Mammary epithelial cell (primary cell): ENCODE measurements at regions of chr16 and their contacts with region 1.

Region 1: GRCh38 chr16:79601931-79602627 is 1.5 kb upstream of the MAF start:
- DNase-seq: peak; percentile 72
- H3K4me3 ChIP-seq: peak overlapping the region; percentile 87 to 94 (median 90)
- H3K27ac ChIP-seq: peak overlapping the region; percentile 56
- H3K4me1 ChIP-seq: peaks cover 29% of the 10 kb centered on the region
- H3K27me3 ChIP-seq: no peaks in the 10 kb centered on the region
- CTCF ChIP-seq: peak; percentile 73 to 75

Region 2: DNA sequence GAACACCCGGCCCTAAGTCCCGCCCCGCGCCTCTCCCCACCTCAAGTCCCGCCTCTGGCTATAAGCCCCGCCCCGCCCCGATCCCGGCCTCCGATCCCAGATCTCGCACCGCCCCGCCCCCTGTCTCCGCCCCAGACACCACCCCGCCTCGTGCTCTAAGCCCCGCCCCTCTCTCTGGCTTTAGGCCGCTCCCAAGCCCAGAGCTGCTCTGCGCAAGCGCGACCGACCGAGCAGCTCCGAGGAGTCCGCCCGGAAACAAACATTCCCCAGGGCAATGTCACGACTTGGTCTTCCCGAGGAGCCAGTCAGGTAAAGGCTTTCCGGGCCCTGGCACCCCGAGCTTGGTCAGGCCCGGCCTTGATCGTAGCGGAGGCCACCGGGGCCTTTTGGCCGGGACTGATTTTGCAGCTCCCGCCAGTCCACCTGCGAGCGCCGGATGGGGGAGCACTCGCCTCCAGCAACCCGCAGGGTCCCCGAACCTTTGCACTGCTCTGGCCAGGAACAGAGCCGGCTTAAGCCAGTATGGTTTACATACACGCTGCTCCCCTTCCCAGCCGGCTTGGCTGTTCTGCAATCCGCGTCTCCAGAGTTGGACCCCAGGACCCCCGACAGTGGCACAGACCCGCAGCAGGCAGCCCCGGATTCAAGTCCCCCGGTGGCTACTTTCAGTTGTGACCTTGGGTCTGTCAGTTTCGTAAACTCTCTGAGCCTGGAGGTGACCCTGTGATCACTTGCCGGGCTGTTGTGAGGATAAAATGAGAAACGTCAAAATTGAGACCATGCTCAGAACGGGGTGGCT is 1879.6 kb before region 1 on chr16 and contains the start of gene NUDT7:
- CTCF ChIA-PET with region 1: no interaction called
- dilution Hi-C with region 1: no loop called
- in situ Hi-C with region 1: no loop called
- intact Hi-C with region 1: loop called (anchors 10 kb)
- DNase-seq: peak; percentile 94
- H3K4me3 ChIP-seq: peak within 1 kb of the TSS; percentile 59 to 67 (median 63)
- H3K27ac ChIP-seq: peak within 1 kb of the TSS; percentile 68
- H3K4me1 ChIP-seq: peaks cover 10% of the 10 kb centered on the region
- H3K27me3 ChIP-seq: no peaks in the 10 kb centered on the region
- CTCF ChIP-seq: peak in 1 of 2 donors; percentile 33
- total RNA-seq, gene NUDT7: 2.8 to 5.1 TPM

Region 3: GRCh38 chr16:78684040-78684611 is 918.0 kb before region 1 on chr16:
- CTCF ChIA-PET with region 1: no interaction called
- dilution Hi-C with region 1: no loop called
- in situ Hi-C with region 1: loop called in 1 of 2 experiments (anchors 10 kb)
- intact Hi-C with region 1: no loop called
- DNase-seq: peak; percentile 53
- H3K4me3 ChIP-seq: no peak overlapping the region
- H3K27ac ChIP-seq: peak overlapping the region; percentile 95
- H3K4me1 ChIP-seq: peaks cover 25% of the 10 kb centered on the region
- H3K27me3 ChIP-seq: no peaks in the 10 kb centered on the region
- CTCF ChIP-seq: no peak

Region 4: DNA sequence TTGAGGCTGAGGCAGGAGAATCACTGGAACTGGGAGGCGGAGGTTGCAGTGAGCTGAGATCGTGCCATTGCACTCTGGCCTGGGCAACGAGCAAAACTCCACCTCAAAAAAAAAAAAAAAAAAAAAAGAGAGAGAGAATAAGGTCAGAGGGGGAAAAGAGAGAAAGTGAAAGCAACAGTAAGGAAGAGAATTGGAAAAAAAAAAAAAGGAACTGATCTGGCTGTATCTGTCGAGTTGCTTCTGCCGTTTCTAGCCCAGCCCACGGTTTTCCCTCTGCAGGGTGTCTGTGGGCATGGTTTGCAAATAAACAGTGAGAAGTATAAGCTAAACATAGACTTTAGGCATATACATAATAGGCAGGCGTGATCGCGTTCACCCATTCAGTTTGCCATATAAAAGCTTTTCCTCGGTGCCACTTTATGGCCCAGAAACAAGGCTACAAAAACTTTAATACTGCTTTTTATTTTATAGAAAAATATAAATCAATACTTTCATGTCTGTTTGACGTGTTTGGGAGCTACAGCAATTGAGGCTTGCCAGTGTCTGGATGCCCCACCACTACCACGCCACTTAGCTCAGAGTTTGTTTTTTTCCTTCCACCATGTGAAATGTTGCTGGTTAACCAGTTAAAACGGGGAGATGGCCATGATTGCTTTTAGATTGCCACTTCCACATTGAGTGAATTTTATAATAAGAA is 438.2 kb before region 1 on chr16:
- CTCF ChIA-PET with region 1: no interaction called
- dilution Hi-C with region 1: no loop called
- in situ Hi-C with region 1: no loop called
- intact Hi-C with region 1: no loop called
- DNase-seq: no peak
- H3K4me3 ChIP-seq: no peak overlapping the region
- H3K27ac ChIP-seq: no peak overlapping the region
- H3K4me1 ChIP-seq: no peaks in the 10 kb centered on the region
- H3K27me3 ChIP-seq: no peaks in the 10 kb centered on the region
- CTCF ChIP-seq: no peak

Region 5: GRCh38 chr16:79469999-79470398 is 132.1 kb before region 1 on chr16:
- CTCF ChIA-PET with region 1: no interaction called
- dilution Hi-C with region 1: no loop called
- in situ Hi-C with region 1: no loop called
- intact Hi-C with region 1: loop called (anchors 5 kb)
- DNase-seq: no peak
- H3K4me3 ChIP-seq: no peak overlapping the region
- H3K27ac ChIP-seq: no peak overlapping the region
- H3K4me1 ChIP-seq: no peaks in the 10 kb centered on the region
- H3K27me3 ChIP-seq: no peaks in the 10 kb centered on the region
- CTCF ChIP-seq: no peak

Region 6: GRCh38 chr16:79535130-79535529 is 66.9 kb before region 1 on chr16:
- CTCF ChIA-PET with region 1: no interaction called
- dilution Hi-C with region 1: no loop called
- in situ Hi-C with region 1: no loop called
- intact Hi-C with region 1: no loop called
- DNase-seq: no peak
- H3K4me3 ChIP-seq: no peak overlapping the region
- H3K27ac ChIP-seq: no peak overlapping the region
- H3K4me1 ChIP-seq: peaks cover 4% of the 10 kb centered on the region
- H3K27me3 ChIP-seq: peaks cover 3% of the 10 kb centered on the region
- CTCF ChIP-seq: no peak

Region 7: GRCh38 chr16:79628501-79628975 is 26.5 kb after region 1 on chr16:
- CTCF ChIA-PET with region 1: no interaction called
- dilution Hi-C with region 1: no loop called
- in situ Hi-C with region 1: no loop called
- intact Hi-C with region 1: no loop called
- DNase-seq: peak; percentile 97
- H3K4me3 ChIP-seq: no peak overlapping the region
- H3K27ac ChIP-seq: peak overlapping the region; percentile 56
- H3K4me1 ChIP-seq: peaks cover 27% of the 10 kb centered on the region
- H3K27me3 ChIP-seq: no peaks in the 10 kb centered on the region
- CTCF ChIP-seq: no peak

Region 8: GRCh38 chr16:79664407-79664806 is 62.3 kb after region 1 on chr16:
- CTCF ChIA-PET with region 1: no interaction called
- dilution Hi-C with region 1: no loop called
- in situ Hi-C with region 1: no loop called
- intact Hi-C with region 1: no loop called
- DNase-seq: no peak
- H3K4me3 ChIP-seq: no peak overlapping the region
- H3K27ac ChIP-seq: no peak overlapping the region
- H3K4me1 ChIP-seq: peaks cover 23% of the 10 kb centered on the region
- H3K27me3 ChIP-seq: no peaks in the 10 kb centered on the region
- CTCF ChIP-seq: no peak

Region 9: GRCh38 chr16:79770244-79771064 is 168.4 kb after region 1 on chr16:
- CTCF ChIA-PET with region 1: no interaction called
- dilution Hi-C with region 1: no loop called
- in situ Hi-C with region 1: loop called (anchors 10 to 25 kb)
- intact Hi-C with region 1: loop called (anchors 1 kb)
- DNase-seq: peak; percentile 88
- H3K4me3 ChIP-seq: peak overlapping the region; percentile 59 to 62 (median 61)
- H3K27ac ChIP-seq: peak overlapping the region; percentile 30
- H3K4me1 ChIP-seq: peaks cover 28% of the 10 kb centered on the region
- H3K27me3 ChIP-seq: no peaks in the 10 kb centered on the region
- CTCF ChIP-seq: peak in 1 of 2 donors; percentile 18

Region 10: GRCh38 chr16:80084685-80085084 is 482.6 kb after region 1 on chr16:
- CTCF ChIA-PET with region 1: no interaction called
- dilution Hi-C with region 1: no loop called
- in situ Hi-C with region 1: no loop called
- intact Hi-C with region 1: loop called (anchors 1 kb)
- DNase-seq: peak; percentile 57
- H3K4me3 ChIP-seq: no peak overlapping the region
- H3K27ac ChIP-seq: no peak overlapping the region
- H3K4me1 ChIP-seq: no peaks in the 10 kb centered on the region
- H3K27me3 ChIP-seq: no peaks in the 10 kb centered on the region
- CTCF ChIP-seq: peak; percentile 58 to 72

Region 11: GRCh38 chr16:80466024-80466987 is 864.2 kb after region 1 on chr16:
- CTCF ChIA-PET with region 1: no interaction called
- dilution Hi-C with region 1: no loop called
- in situ Hi-C with region 1: no loop called
- intact Hi-C with region 1: loop called (anchors 2 kb)
- DNase-seq: peak; percentile 35
- H3K4me3 ChIP-seq: no peak overlapping the region
- H3K27ac ChIP-seq: no peak overlapping the region
- H3K4me1 ChIP-seq: peaks cover 6% of the 10 kb centered on the region
- H3K27me3 ChIP-seq: no peaks in the 10 kb centered on the region
- CTCF ChIP-seq: peak; percentile 84 to 92